ENCODE measurements at regions of chr7 and their contacts with region 1.

Region 1: DNA sequence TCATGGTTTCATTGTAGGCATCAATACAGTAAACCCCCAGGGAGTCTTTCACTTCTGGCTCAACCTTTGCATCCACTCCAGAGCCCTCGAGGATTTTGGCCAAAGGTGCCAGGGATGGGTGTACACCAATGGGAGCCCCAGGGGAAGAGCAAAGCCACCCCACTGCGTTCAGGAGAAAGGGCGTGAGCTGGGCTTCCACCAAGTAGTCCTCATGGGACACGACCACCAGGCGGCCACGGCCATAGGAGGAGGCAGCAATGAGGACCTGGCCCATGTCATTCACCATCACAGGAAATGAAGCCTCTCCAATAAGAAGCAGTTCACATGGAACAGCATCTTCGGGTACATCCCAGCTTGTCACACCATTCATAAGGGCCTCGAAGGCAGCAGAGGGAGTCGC is 25.8 kb downstream of the TCAF1 start:
- DNase-seq: no peak
- H3K4me3 ChIP-seq: no peak overlapping the region
- H3K27ac ChIP-seq: no peak overlapping the region
- H3K4me1 ChIP-seq: no peaks in the 10 kb centered on the region
- H3K27me3 ChIP-seq: no peaks in the 10 kb centered on the region
- CTCF ChIP-seq: no peak

Region 2: DNA sequence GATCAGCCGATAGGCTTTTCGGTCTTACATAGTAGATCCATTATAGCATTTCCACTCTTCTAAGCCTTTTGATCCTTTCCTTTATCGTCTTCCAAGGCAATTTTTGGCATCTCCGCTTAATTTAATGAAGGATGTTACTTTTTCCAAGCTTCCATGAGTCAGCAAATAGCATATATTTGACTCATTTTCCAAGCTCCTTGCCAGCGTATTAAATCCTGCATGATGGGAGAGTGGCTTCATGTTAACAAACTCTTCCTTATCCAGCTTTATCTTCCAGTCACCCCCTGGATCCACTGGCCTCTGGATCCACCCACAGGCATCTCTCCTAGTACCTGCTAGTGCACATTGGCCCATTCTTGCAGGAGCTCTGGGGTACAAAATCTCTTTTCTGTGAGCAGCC is 862.3 kb before region 1 on chr7:
- intact Hi-C with region 1: loop called (anchors 10 kb)
- DNase-seq: no peak
- H3K4me3 ChIP-seq: no peak overlapping the region
- H3K27ac ChIP-seq: no peak overlapping the region
- H3K4me1 ChIP-seq: no peaks in the 10 kb centered on the region
- H3K27me3 ChIP-seq: no peaks in the 10 kb centered on the region
- CTCF ChIP-seq: no peak

Region 3: DNA sequence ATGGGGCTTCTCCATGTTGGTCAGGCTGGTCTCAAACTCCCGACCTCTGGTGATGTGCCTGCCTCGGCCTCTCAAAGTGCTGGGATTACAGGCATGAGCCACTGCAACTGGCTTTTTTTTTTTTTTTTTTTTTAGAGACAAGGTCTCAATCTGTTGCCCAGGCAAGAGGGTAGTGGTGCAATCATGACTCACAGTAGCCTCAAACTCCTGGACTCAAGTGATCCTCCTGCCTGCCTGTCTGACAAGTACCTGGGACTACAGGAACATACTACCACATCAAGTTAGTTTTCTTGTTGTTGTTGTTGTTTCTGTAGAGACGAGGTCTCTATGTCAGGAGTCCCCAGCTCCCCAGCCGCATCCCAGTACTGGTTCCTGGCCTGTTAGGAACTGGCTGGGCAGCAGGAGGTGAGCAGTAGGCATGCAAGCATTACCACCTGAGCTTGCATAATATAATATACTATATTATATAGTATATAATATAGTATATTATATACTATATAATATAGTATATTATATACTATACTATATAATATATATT is 903.9 kb after region 1 on chr7:
- intact Hi-C with region 1: no loop called
- DNase-seq: no peak
- H3K4me3 ChIP-seq: no peak overlapping the region
- H3K27ac ChIP-seq: no peak overlapping the region
- H3K4me1 ChIP-seq: no peaks in the 10 kb centered on the region
- H3K27me3 ChIP-seq: no peaks in the 10 kb centered on the region
- CTCF ChIP-seq: no peak